Breast epithelium (tissue), 4 donors: ENCODE measurements at regions of chr18 and their contacts with region 1.

Region 1: DNA sequence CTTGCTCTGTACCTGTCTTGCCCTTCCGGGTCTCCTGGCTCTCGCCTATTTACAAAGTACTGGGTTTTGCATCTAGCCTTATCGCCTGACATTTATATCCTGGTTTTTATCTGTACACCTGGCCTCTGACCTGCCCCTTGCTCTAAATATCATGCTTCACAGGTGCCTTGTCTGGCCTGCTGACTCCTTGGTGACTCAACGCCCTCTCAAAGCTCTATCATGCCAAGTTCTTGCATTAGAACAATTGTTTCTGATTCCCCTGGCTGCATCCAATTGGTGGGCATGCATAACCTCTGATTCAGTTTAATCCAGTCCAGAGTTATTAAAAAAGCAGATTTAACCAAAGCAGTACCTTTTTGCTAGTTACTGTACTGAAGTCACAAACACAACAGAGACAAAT is 113.9 kb upstream of the CCDC68 start:
- DNase-seq: no peak
- H3K4me3 ChIP-seq: no peak overlapping the region
- H3K27ac ChIP-seq: no peak overlapping the region
- H3K4me1 ChIP-seq: no peaks in the 10 kb centered on the region
- H3K27me3 ChIP-seq: no peaks in the 10 kb centered on the region
- CTCF ChIP-seq: no peak
- POLR2A ChIP-seq: no peak

Region 2: DNA sequence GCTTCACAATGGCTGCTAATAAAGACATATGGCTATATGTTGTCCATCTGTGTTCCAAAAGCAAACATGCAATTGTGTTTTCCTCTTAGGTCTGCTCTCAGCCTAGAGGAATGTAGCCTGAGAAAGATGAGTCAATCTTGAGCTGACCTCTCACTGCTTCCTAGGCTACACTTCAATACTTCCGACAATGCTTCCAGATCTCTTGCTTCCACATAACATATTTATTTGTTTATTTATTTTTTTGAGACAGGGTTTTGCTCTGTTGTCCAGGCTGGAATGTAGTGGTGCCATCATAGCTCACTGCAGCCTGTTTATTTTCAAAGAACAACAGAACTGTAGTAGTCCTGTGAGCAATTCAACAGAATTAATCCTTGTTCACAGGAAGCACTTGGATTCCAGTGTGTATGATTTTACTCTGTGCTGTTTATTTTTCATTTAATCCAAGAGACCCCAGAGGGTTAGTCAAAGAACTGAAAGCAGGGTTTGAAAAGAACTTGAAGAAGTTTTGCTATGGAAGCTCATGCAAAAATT is 1127.3 kb after region 1 on chr18:
- intact Hi-C with region 1: loop called (anchors 5 kb)
- DNase-seq: no peak
- H3K4me3 ChIP-seq: no peak overlapping the region
- H3K27ac ChIP-seq: peak overlapping the region in 1 of 2 donors; percentile 44
- H3K4me1 ChIP-seq: no peaks in the 10 kb centered on the region
- H3K27me3 ChIP-seq: no peaks in the 10 kb centered on the region
- CTCF ChIP-seq: no peak
- POLR2A ChIP-seq: no peak